BJ (cell line): ENCODE measurements at regions of chr5 and their contacts with region 1.

Region 1: DNA sequence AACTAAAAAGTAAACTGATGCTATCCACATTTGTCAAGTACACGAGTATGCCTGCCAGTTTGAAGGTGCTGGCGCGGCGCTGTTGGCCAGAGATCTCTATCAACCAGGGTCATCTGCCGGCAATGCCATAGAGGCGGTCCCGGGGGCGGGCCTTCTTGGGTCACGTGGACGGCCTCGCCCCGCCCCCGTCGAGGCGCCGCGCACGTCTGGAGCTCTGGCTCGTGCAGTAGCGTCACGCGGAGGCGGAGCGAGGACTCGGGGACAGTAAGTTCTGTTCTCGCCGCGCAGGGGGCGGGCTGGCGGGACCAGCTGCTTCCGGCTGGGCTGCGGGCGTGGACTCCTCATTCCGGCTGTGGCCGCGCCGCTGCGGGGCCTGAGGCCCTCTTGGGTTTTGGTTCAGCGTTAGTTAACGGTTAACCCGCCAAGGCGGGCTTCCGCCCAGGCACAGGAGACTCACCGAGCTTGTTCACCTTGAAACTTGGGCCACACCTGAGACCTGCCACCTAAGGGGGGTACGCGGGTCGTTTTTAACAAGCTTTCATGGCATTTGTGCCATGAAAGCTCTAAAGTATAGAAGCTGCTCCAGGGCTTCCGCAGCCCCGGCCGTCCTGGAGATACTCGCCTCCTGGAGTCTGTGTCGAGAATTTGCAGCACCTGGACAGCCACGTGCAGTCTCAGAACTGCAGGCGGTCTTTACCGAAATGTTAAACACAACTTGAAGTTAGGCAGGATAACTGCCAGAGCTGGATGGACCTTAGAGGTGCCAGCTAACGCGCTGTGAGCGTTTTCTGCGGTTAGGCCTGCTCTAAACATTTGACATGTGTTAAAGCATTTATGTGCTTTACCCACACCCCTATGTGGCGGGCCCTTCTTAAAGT is at the start of gene RFESD:
- DNase-seq: peak; percentile 72
- H3K4me3 ChIP-seq: peak within 1 kb of the TSS; percentile 55
- H3K27me3 ChIP-seq: no peaks in the 10 kb centered on the region
- CTCF ChIP-seq: 0 out of 2 replicates have a peak, but pooled peaks have one; percentile 3
- polyA plus RNA-seq, gene RFESD: 1.1 and 1.9 TPM in 2 replicates

Region 2: DNA sequence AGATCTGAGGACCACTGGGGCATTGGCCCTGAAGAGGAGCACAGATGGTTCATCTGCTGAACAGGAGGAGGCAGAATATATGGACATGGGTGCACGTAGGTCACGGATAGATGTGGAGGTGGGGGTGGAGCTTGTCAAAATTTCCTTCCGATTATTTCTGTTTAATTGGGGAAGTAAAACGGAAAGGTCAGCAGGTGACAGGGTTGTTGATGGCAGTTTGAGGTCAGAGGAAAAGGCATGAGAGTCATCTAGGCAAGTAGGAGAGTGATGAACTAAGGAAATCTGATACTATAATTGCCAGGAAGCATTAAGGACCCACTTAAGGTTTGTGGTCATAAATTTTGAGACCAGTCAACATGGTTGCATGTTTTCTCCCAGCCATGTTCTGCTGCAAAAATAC is 264.0 kb before region 1 on chr5:
- CTCF ChIA-PET with region 1: no interaction called
- POLR2A ChIA-PET with region 1: no interaction called
- DNase-seq: no peak
- H3K4me3 ChIP-seq: no peak overlapping the region
- H3K27me3 ChIP-seq: no peaks in the 10 kb centered on the region
- CTCF ChIP-seq: no peak

Region 3: DNA sequence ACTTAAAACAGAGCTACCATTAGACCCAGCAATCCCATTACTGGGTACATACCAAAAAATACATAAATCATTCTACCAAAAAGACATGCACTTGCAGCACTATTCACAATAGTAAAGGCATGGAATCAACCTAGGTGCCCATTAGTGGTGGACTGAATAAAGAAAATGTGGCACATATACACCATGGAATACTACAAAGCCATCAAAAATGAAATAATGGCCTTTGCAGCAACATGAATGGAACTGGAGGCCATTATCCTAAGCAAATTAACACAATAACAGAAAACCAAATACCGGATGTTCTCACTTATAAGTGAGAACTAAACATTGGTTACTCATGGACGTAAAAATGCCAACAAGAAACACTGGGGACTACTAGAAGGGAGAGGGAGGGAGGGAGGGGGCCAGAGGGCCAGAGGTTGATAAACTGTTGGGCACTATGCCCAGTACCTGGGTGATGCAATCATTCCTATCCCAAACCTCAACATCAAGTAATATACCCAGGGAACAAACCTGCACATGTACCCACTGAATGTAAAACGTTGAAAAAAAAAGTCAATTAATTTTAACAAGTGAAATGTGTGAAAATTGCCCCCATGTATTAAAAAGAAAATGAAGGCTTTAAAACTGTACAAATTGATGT is 51.4 kb before region 1 on chr5:
- CTCF ChIA-PET with region 1: no interaction called
- POLR2A ChIA-PET with region 1: no interaction called
- DNase-seq: no peak
- H3K4me3 ChIP-seq: no peak overlapping the region
- H3K27me3 ChIP-seq: no peaks in the 10 kb centered on the region
- CTCF ChIP-seq: no peak

Region 4: GRCh38 chr5:95631991-95632675 is 14.7 kb before region 1 on chr5:
- CTCF ChIA-PET with region 1: interaction called, 13 read pairs
- POLR2A ChIA-PET with region 1: interaction called, 8 read pairs
- DNase-seq: no peak
- H3K4me3 ChIP-seq: no peak overlapping the region
- H3K27me3 ChIP-seq: no peaks in the 10 kb centered on the region
- CTCF ChIP-seq: no peak

Region 5: DNA sequence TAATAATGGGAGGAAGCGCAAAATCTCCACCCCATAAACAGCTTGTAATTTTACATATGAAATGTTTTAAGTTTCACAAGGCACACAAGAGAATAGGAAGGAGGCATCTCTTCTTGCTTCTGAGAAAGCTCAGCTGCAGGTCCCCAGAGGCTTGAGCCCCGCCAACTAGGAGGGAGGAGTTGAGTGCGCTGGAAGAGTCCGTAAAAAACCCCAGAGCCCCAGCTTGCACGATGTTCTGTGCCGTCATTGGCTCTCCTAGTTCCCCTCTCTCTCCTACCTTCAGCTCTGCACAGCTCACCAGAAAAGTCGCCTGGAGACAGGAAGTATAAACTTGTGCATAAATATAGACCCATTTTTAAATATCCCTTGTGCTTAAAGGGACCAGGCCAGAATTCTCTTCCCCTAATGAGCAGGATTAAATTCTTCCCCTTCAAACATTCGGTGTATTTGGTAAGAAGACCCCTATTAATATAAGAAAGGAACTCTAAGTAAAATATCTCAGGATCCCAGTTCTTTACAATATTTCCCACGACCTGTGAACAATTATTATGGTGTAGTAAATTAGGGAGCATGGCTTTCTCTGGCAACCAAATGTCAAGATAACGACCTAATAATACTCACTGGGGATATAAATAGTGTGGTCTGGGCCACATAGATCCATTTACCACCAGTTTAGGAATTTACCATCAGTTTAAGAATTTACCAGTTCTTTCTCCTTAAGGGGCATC is 162.1 kb after region 1 on chr5:
- CTCF ChIA-PET with region 1: no interaction called
- POLR2A ChIA-PET with region 1: interaction called, 12 read pairs
- DNase-seq: no peak
- H3K4me3 ChIP-seq: no peak overlapping the region
- H3K27me3 ChIP-seq: no peaks in the 10 kb centered on the region
- CTCF ChIP-seq: no peak

Region 6: DNA sequence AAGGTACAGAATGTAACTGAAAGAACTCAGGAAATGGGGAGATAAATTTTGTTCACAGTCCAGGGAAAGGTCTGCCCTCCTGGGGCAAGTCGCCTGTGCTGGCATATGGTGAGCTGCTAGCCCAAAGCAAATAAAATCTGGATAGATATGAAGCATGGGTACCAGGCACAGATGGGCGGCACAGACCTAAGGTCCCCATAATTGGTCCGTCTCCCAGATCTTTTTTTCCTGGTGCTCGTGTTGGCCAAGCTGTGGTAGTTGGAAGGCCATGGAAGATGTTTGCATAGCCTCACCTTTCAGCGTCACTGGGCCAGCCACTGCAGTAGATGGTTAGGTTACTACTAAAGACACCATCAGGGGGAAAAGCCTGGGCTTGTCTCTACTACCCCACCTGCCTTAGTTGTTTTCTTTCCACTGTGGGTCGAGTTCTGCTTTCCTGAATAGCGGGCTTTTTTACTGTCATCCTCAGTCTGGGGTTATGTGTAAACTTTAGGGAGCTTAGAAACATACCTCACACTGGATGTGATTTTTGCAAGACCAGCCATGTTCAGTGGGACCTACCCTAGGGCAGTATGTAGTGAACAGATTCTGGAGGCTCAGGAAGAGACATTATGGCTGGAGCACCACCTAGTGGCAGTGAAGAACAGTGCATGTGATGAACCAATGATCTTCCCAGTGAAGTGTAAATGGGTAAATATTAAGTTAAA is 199.9 kb after region 1 on chr5:
- CTCF ChIA-PET with region 1: interaction called, 78 read pairs
- POLR2A ChIA-PET with region 1: interaction called, 7 read pairs
- DNase-seq: no peak
- H3K4me3 ChIP-seq: no peak overlapping the region
- H3K27me3 ChIP-seq: no peaks in the 10 kb centered on the region
- CTCF ChIP-seq: peak; percentile 88